K562 (cell line): ENCODE measurements at regions of chr1 and their contacts with region 1.

Region 1: DNA sequence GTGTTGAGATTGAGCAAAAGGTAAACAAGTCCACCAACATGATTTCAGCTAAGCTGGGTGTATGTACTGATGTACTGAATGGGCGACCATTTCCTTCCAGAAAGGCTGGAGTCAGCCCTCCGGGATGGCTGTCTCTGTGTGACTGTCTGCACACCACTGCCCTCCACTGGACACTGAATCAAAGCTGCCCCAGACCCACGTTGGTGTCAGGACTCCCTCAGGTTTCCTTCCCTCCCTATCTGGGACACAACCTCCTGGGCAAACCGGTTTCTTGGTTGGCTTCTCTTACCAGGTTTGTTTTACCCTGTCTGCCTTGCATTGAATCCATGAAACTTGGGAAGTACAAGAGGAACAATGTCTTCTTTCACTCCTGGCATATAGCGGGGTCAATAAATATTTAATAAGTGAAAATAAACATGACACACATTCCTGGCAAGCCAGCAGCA is 5.3 kb upstream of the SRP9 start:
- DNase-seq: peak; percentile 78 to 90 (median 80)
- ATAC-seq: peak; percentile 93
- H3K4me3 ChIP-seq: no peak overlapping the region
- H3K27ac ChIP-seq: no peak overlapping the region
- H3K4me1 ChIP-seq: peaks cover 13 to 23% of the 10 kb centered on the region in 2 experiments
- H3K27me3 ChIP-seq: no peaks in the 10 kb centered on the region
- CTCF ChIP-seq: peak; percentile 92 to 97 (median 95)
- EP300 ChIP-seq: no peak
- POLR2A ChIP-seq: no peak
- RAD21 ChIP-seq: peak; percentile 93 to 97

Region 2: DNA sequence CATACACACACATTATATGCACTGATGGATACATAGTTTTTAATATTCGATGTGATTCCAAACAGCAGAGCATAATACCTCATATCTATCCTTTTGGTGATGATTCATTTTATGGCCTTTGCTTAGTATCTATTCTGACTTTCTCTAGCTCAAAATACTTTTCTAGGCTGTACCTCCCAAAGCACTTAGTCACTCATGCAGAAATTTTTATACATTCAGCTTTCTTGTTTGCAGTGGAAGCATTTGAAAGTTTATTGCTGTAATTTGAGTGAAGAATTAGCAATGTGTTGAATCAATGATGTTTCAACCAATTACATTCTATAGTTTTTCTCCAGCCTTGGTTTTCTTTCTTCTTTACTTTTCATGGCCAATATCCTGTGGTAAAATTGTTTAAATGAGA is 411.2 kb before region 1 on chr1:
- CTCF ChIA-PET with region 1: no interaction called
- POLR2A ChIA-PET with region 1: no interaction called
- in situ Hi-C with region 1: no loop called
- intact Hi-C with region 1: no loop called
- DNase-seq: no peak
- ATAC-seq: no peak
- H3K4me3 ChIP-seq: no peak overlapping the region
- H3K27ac ChIP-seq: no peak overlapping the region
- H3K4me1 ChIP-seq: no peaks in the 10 kb centered on the region
- H3K27me3 ChIP-seq: peaks cover 4 to 6% of the 10 kb centered on the region in 2 experiments; a peak in 3 of 5 replicates
- CTCF ChIP-seq: no peak
- EP300 ChIP-seq: no peak
- POLR2A ChIP-seq: no peak
- RAD21 ChIP-seq: no peak

Region 3: DNA sequence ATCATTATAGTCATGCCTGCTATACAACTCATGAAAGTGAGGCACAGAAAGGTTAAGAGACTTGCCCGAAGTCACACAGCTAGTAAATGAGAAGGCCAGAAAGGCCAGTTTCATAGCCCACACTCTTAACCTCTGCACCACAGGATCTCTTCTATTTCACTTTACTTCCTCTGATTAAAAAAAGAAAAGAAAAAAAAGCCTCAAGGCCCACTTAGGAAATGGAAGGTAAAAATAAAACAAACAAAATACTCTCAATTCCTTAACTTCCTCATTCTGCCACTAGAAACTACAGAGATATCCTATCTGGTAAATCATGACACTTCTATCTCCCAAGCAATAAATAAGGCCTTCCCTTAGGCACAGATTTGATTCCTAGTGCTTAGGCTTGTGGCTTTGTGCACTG is 111.8 kb before region 1 on chr1:
- CTCF ChIA-PET with region 1: no interaction called
- POLR2A ChIA-PET with region 1: no interaction called
- in situ Hi-C with region 1: no loop called
- intact Hi-C with region 1: loop called (anchors 5 kb)
- DNase-seq: no peak
- ATAC-seq: no peak
- H3K4me3 ChIP-seq: no peak overlapping the region
- H3K27ac ChIP-seq: no peak overlapping the region
- H3K4me1 ChIP-seq: no peaks in the 10 kb centered on the region
- H3K27me3 ChIP-seq: peaks cover 25 to 50% of the 10 kb centered on the region in 2 experiments; a peak in 4 of 5 replicates
- CTCF ChIP-seq: no peak
- EP300 ChIP-seq: no peak
- POLR2A ChIP-seq: no peak
- RAD21 ChIP-seq: no peak

Region 4: DNA sequence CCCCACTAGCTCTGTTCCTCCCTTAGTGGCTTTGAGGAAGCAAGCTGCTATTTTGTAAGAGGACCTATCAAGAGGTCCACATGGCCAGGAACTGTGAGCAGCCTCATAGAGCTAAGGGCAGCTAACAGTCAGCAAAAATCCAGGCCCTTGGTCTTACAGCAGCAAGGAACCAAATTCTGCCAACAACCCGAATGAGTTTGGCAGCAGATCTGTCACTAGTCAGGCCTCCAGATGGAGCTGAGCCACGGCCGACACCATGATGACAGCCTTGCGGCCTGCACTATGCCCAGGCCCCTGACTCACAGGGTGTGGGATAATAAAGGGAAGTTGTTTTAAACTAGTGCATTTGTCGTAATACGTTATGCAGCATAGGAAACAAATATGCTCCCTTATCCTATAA is 262.1 kb after region 1 on chr1:
- CTCF ChIA-PET with region 1: no interaction called
- POLR2A ChIA-PET with region 1: no interaction called
- in situ Hi-C with region 1: no loop called
- intact Hi-C with region 1: no loop called
- DNase-seq: peak in 2 of 4 experiments; percentile 45 to 55
- ATAC-seq: peak; percentile 71
- H3K4me3 ChIP-seq: no peak overlapping the region
- H3K27ac ChIP-seq: peak overlapping the region; percentile 55; the same call in 2 of the 3 replicates
- H3K4me1 ChIP-seq: peaks cover 4 to 13% of the 10 kb centered on the region in 2 experiments
- H3K27me3 ChIP-seq: no peaks in the 10 kb centered on the region
- CTCF ChIP-seq: no peak
- EP300 ChIP-seq: no peak
- POLR2A ChIP-seq: no peak
- RAD21 ChIP-seq: 0 out of 4 replicates have a peak, but pooled peaks of 1 of the 2 experiments have one; percentile 17